AG04449 (cell line): ENCODE measurements at regions of chr6 and their contacts with region 1.

Region 1: DNA sequence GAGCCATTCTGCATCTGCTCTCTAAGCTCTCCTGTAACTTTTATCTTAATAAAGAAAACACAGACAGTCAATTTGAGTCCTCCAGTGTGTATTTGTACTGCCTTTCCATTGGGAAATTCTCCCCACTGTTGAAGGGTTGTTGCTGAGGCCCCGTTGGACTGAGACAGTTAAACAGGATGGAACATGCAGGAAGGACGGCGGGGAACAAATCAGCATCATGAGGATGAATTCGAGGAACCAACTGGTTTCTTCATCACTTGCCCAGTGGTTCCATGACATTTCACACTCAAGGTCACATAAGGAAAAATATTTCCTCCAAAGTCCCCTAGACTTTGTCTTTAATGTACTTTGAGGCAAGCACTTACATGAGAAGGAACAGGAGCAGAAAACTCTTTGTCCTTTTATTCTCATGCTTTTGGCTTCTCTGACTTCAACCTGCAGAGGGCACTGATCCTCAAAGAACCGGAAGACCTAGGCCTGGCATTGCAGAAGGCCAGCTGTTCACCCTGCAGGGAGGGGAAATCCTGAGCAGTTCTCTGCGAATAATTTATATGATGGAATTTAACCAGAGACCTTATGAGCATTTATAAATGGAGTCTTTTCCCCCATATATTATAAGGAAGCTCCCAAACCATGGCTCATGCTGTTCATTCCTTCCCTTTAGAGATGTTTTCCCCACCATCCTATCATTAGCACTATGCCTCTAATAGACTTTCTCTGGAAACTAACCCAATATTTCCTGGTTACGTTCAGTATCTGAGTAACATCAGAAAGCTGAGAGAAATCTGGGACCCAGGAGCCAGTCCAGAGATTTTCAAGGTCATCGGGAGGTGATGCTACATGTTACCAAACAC is 55.2 kb upstream of the ADGRF1 start:
- DNase-seq: peak; percentile 42
- H3K4me3 ChIP-seq: no peak overlapping the region
- CTCF ChIP-seq: peak; percentile 53

Region 2: DNA sequence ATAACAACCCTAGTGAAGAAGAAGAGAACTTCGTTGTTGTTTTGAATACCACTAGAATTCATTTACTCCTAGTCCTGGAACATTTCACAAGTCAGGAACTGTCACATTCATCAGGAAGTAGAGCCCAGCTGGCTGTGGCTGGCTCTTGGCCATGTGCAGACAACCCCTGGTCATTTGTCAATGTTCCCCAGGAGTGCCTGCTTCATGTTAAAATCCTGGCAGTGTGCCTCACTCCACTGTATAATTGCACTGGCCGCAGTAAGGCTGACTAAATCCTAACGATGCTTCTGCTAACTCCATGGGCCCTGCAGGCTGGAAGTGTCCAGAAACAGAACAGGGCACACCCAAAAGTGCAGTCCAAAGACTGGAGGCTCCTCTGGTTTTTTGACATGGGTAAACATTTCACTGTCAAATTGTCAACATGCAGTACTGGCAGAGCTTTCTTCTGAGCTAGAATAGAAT is 13.7 kb before region 1 on chr6:
- CTCF ChIA-PET with region 1: interaction called, 18 read pairs
- POLR2A ChIA-PET with region 1: no interaction called
- DNase-seq: no peak
- H3K4me3 ChIP-seq: no peak overlapping the region
- CTCF ChIP-seq: no peak

Region 3: DNA sequence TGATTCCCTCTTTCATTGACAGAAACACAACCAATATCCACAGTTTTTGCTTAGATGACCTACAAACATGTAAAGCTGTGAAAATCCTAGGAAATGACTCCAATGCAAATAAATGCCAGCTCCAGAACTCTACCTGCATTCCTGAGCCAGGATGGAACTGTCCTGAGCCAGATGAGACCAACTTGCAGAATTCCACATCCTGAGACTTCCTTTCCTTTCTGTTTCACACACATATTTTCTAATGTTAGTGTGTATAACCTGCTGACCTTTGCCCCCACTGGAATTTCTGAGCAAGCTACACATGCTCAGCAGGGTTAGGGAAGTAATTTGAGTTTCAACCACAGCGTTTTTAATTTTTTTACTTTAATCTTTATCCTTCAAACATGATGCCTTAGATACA is 14.4 kb after region 1 on chr6:
- CTCF ChIA-PET with region 1: interaction called, 14 read pairs
- POLR2A ChIA-PET with region 1: no interaction called
- DNase-seq: no peak
- H3K4me3 ChIP-seq: no peak overlapping the region
- CTCF ChIP-seq: no peak

Region 4: DNA sequence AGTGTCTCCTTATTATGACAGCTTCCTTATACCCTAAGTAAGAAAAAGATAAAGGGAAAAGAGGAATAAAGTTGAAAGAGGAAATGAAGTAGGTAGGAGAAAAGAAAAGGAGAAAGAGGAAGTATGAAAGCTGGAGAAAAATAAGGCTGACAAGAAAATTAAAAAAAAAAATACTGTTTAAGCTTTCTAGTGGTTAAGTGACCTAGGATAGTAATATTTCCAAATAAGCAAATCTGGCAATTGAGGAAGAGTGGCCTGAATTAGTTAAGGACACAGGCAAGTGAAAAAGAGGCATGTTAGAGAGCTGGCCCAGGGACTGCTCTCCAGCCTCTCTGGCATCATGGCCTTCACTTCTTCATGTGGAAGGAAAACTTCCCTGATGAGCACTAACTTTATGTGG is 21.3 kb after region 1 on chr6:
- CTCF ChIA-PET with region 1: interaction called, 14 read pairs
- POLR2A ChIA-PET with region 1: no interaction called
- DNase-seq: no peak
- H3K4me3 ChIP-seq: no peak overlapping the region
- CTCF ChIP-seq: no peak

Region 5: DNA sequence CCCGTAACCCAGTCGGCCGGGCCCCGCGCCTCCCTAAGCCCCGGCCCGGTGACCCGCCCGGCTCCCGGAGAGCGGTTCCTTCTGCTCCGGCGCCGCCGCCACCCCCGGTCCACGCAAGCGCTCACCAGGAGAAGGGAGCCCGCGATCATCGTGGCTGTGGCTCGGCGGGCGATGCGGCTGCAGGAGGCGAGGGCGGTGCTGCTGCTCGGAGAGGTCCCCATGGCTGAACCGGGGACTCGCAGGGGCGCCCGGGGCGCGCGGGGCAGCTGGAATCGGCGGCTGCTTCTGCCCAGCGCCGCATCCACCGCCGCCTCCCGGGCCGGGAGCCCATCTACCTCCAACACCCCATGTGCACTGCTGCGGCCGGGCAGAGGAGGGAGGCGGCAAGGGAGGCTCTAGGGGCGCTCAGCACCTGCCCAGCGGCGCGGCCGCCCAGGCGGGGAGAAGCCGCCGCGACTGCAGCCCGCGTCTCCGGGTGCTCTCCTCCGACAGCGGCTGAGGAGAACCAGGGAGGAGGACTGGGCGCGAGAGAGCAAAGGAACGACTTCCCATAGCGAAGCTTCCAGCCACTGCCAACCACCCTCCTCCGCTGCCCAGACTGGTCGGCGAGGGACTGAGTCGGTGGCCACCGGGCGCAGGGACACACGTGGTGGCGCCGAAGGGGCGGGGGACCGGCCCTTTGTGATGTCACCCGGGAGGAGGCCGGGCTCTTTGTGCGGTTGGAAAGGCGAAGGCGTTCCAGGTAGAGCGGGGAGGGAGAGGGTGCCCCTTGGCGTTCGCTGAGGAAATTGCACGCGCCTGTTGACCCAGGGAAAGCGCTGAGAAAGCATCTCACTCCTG is 212.2 kb after region 1 on chr6 and contains the start of gene TNFRSF21:
- CTCF ChIA-PET with region 1: interaction called, 331 read pairs
- POLR2A ChIA-PET with region 1: no interaction called
- DNase-seq: peak; percentile 21
- H3K4me3 ChIP-seq: peak within 1 kb of the TSS; percentile 75
- CTCF ChIP-seq: peak; percentile 94